Activated naive CD4-positive, alpha-beta T cell treated with anti-CD3 and anti-CD28 coated beads for 36 hours (primary cell): ENCODE measurements at regions of chr5 and their contacts with region 1.

Region 1: DNA sequence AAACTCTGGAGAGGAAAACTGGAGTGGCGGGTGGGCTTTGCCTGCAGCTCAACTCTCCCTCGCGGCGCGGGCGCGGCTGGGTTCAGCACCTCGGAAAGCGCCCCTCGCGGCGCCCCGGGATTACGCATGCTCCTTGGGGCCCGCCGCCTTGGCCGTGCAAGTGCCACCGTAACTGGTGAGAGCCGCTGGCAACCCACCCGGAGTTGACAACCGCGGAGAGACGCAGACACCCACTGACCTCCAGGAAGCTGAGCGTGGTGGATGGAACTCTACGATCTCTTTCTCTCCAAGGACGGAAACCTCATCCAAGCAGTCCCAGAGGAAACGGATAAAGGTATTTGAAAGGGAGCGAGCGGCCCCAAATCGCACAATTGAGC is 194 bp upstream of the RXFP3 start:
- DNase-seq: peak; percentile 58
- H3K4me3 Mint-ChIP-seq: no peak overlapping the region
- H3K27ac Mint-ChIP-seq: no peak overlapping the region
- H3K4me1 Mint-ChIP-seq: peaks cover 8% of the 10 kb centered on the region
- H3K27me3 Mint-ChIP-seq: peaks cover 46% of the 10 kb centered on the region

Region 2: GRCh38 chr5:32767948-32768427 is 1168.0 kb before region 1 on chr5:
- CTCF ChIA-PET with region 1: no interaction called
- intact Hi-C with region 1: no loop called
- DNase-seq: no peak
- H3K4me3 Mint-ChIP-seq: no peak overlapping the region
- H3K27ac Mint-ChIP-seq: no peak overlapping the region
- H3K4me1 Mint-ChIP-seq: no peaks in the 10 kb centered on the region
- H3K27me3 Mint-ChIP-seq: peaks cover 1% of the 10 kb centered on the region

Region 3: GRCh38 chr5:33433303-33434240 is 502.4 kb before region 1 on chr5:
- CTCF ChIA-PET with region 1: interaction called, 21 read pairs
- intact Hi-C with region 1: loop called (anchors 1 kb)
- DNase-seq: no peak
- H3K4me3 Mint-ChIP-seq: no peak overlapping the region
- H3K27ac Mint-ChIP-seq: no peak overlapping the region
- H3K4me1 Mint-ChIP-seq: peaks cover 6% of the 10 kb centered on the region
- H3K27me3 Mint-ChIP-seq: peaks cover 6% of the 10 kb centered on the region

Region 4: GRCh38 chr5:33588654-33589372 is 347.2 kb before region 1 on chr5:
- CTCF ChIA-PET with region 1: interaction called, 21 read pairs
- intact Hi-C with region 1: loop called (anchors 1 kb)
- DNase-seq: peak; percentile 65
- H3K4me3 Mint-ChIP-seq: no peak overlapping the region
- H3K27ac Mint-ChIP-seq: no peak overlapping the region
- H3K4me1 Mint-ChIP-seq: no peaks in the 10 kb centered on the region
- H3K27me3 Mint-ChIP-seq: no peaks in the 10 kb centered on the region

Region 5: DNA sequence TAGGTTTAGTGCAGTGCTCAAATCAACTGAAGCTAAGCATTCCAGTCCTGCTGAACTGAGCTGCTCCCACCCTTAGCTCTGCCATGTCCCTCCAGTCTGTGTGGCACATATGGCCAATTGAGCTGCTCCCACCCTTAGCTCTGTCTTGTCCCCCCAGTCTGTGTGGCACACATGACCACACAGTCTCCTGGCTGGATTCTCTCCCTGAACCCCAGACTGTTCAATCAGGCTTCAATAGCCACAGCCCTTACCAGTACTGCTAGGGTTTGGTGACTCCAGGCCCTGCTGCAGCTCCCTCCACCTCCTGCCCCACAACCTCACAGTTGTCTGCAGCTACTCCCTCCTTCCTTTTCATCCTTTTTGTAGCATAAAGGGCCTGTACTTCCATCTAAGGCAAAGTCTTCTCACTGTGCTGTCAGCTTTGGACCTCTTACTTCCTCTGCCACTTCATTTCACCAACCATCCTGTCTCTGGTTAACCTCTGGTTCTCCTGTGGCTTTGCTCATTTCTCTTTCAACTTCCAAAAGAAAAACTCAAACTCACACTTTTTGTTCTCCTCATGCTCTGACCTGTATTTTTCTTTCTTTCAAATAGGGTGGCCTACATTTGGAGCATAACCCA is 95.0 kb before region 1 on chr5:
- CTCF ChIA-PET with region 1: interaction called, 3 read pairs
- intact Hi-C with region 1: loop called (anchors 5 kb)
- DNase-seq: peak; percentile 19
- H3K4me3 Mint-ChIP-seq: no peak overlapping the region
- H3K27ac Mint-ChIP-seq: no peak overlapping the region
- H3K4me1 Mint-ChIP-seq: peaks cover 18% of the 10 kb centered on the region
- H3K27me3 Mint-ChIP-seq: no peaks in the 10 kb centered on the region

Region 6: GRCh38 chr5:33850100-33850594 is 85.8 kb before region 1 on chr5:
- CTCF ChIA-PET with region 1: interaction called, 3 read pairs
- intact Hi-C with region 1: loop called (anchors 2 kb)
- DNase-seq: peak; percentile 70
- H3K4me3 Mint-ChIP-seq: no peak overlapping the region
- H3K27ac Mint-ChIP-seq: peak overlapping the region; percentile 55
- H3K4me1 Mint-ChIP-seq: peaks cover 8% of the 10 kb centered on the region
- H3K27me3 Mint-ChIP-seq: no peaks in the 10 kb centered on the region

Region 7: GRCh38 chr5:33969572-33970452 is 33.8 kb after region 1 on chr5:
- CTCF ChIA-PET with region 1: interaction called, 18 read pairs
- intact Hi-C with region 1: loop called (anchors 5 kb)
- DNase-seq: peak; percentile 12
- H3K4me3 Mint-ChIP-seq: no peak overlapping the region
- H3K27ac Mint-ChIP-seq: no peak overlapping the region
- H3K4me1 Mint-ChIP-seq: peaks cover 13% of the 10 kb centered on the region
- H3K27me3 Mint-ChIP-seq: no peaks in the 10 kb centered on the region

Region 8: GRCh38 chr5:34034534-34035327 is 98.7 kb after region 1 on chr5:
- CTCF ChIA-PET with region 1: no interaction called
- intact Hi-C with region 1: no loop called
- DNase-seq: no peak
- H3K4me3 Mint-ChIP-seq: no peak overlapping the region
- H3K27ac Mint-ChIP-seq: no peak overlapping the region
- H3K4me1 Mint-ChIP-seq: no peaks in the 10 kb centered on the region
- H3K27me3 Mint-ChIP-seq: no peaks in the 10 kb centered on the region

Region 9: DNA sequence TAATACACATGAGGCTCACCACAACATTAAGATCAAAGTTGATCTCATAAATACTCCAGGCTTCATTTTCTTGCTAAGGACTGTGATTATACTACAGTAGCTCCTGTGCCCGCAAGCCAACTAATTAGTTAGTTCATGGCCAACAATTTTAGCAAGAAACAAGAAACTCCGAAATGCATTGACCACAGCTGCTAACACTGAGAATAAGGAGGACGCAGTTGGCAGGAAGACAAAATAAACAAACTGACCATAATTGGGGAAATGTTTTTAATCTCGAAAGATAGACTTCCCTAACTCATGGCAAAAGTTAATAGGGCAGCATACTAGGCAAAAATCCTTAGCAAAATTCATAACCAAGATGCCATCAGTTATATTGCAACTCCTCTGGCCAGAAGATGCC is 1566.2 kb after region 1 on chr5:
- CTCF ChIA-PET with region 1: no interaction called
- intact Hi-C with region 1: no loop called
- DNase-seq: no peak
- H3K4me3 Mint-ChIP-seq: no peak overlapping the region
- H3K27ac Mint-ChIP-seq: no peak overlapping the region
- H3K4me1 Mint-ChIP-seq: no peaks in the 10 kb centered on the region
- H3K27me3 Mint-ChIP-seq: no peaks in the 10 kb centered on the region